ENCODE measurements at regions of chrX and their contacts with region 1.

Region 1: GRCh38 chrX:39336671-39337311 is 535.5 kb downstream of the MID1IP1 start:
- DNase-seq: peak in 1 of 2 donors; percentile 63
- H3K4me3 ChIP-seq: peak overlapping the region in 1 of 2 donors; percentile 24
- H3K27ac ChIP-seq: peak overlapping the region; percentile 56 to 60
- H3K4me1 ChIP-seq: peaks cover 0 to 4% of the 10 kb centered on the region in 2 donors
- H3K27me3 ChIP-seq: no peaks in the 10 kb centered on the region
- CTCF ChIP-seq: no peak

Region 2: GRCh38 chrX:38732866-38733265 is 603.9 kb before region 1 on chrX:
- intact Hi-C with region 1: no loop called
- DNase-seq: no peak
- H3K4me3 ChIP-seq: no peak overlapping the region
- H3K27ac ChIP-seq: no peak overlapping the region
- H3K4me1 ChIP-seq: no peaks in the 10 kb centered on the region
- H3K27me3 ChIP-seq: no peaks in the 10 kb centered on the region
- CTCF ChIP-seq: no peak

Region 3: DNA sequence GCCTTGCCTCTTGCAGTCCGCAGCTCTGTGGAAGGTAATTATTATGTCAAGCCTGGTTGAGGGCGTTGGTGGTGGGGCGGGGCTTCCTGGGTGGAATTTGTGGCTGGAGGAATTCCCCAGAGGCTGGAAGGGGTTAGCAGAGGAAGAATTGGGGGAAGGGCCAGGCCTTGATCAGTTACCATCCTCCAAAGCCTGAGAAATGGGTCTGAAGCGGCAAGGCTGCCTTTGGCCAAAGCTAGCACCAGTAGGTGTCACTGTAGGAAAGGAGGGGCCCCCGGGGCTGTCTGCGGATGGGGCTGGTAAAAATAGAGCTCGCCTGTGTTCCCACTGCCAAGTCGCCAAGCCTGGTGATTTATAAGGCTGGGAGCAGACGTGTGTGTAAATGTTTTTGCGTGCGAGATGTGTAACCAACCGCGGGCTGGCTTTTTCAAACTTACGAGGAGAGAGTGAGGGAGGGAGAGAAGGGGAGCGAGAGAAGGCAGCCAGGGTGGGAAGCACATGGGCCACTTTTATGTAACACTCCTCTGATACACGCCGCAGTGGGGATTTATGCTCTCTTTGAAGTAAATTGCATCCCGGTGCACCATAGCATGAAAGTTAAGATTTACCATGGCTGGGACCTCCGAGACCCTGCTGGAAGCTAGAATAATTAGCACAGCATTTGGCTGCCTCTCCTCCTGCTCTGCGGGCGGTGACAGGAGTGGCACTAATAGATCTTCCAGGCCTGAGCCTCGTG is 394.0 kb after region 1 on chrX:
- intact Hi-C with region 1: loop called (anchors 10 kb)
- DNase-seq: peak; percentile 50 to 90
- H3K4me3 ChIP-seq: no peak overlapping the region
- H3K27ac ChIP-seq: peak overlapping the region; percentile 45 to 69
- H3K4me1 ChIP-seq: peaks cover 5 to 12% of the 10 kb centered on the region in 2 donors
- H3K27me3 ChIP-seq: no peaks in the 10 kb centered on the region
- CTCF ChIP-seq: peak; percentile 27 to 68 (median 56)